SK-N-SH (cell line): ENCODE measurements at regions of chr9 and their contacts with region 1.

Region 1: DNA sequence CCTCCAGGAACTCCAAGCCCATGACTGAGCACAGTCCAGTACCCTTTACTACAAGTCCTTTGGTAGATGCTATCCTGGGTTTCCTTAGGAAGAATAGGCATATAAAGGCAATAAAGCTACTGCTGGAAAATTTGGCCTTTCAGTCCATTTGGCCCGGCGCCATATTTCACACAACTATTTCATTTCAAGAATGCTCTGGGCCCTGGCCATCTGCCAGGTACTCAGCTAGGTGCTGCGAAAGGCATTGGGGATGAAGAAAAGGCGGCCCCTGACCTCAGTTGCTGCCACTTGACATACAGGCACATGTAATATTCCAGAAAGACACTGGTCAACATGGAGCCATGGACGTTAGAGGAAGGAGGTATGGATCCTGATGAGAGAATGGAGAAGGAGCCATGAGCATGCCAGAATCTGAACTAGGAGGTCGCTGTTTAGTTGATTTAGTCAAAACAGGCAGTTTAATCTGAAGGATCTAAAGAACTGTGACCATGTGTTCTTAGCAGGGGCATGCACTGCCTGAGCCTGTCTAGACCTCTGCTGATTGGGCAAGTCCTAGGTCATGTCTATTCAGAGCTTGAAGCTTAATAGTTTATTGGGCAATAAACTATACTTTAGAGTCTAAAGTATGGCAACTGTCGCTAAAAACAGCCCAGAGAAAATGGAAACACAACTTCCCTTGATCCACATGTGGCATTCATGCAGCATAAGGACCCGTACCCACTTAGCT is 149.3 kb downstream of the MELK start:
- DNase-seq: no peak
- H3K4me3 ChIP-seq: no peak overlapping the region
- H3K27ac ChIP-seq: no peak overlapping the region
- H3K4me1 ChIP-seq: no peaks in the 10 kb centered on the region
- H3K27me3 ChIP-seq: no peaks in the 10 kb centered on the region; the same call in 1 of the 2 replicates
- CTCF ChIP-seq: no peak
- EP300 ChIP-seq: no peak
- RAD21 ChIP-seq: no peak

Region 2: GRCh38 chr9:36632892-36633291 is 89.1 kb before region 1 on chr9:
- CTCF ChIA-PET with region 1: interaction called, 20 read pairs
- POLR2A ChIA-PET with region 1: no interaction called
- DNase-seq: peak; percentile 47
- H3K4me3 ChIP-seq: no peak overlapping the region
- H3K27ac ChIP-seq: no peak overlapping the region
- H3K4me1 ChIP-seq: no peaks in the 10 kb centered on the region
- H3K27me3 ChIP-seq: no peaks in the 10 kb centered on the region
- CTCF ChIP-seq: peak; percentile 77
- EP300 ChIP-seq: no peak
- RAD21 ChIP-seq: peak; percentile 67

Region 3: GRCh38 chr9:36946653-36947052 is 224.6 kb after region 1 on chr9:
- CTCF ChIA-PET with region 1: no interaction called
- POLR2A ChIA-PET with region 1: no interaction called
- DNase-seq: peak; percentile 45
- H3K4me3 ChIP-seq: no peak overlapping the region
- H3K27ac ChIP-seq: no peak overlapping the region
- H3K4me1 ChIP-seq: peaks cover 0 to 2% of the 10 kb centered on the region in 2 experiments; a peak in 2 of 4 replicates
- H3K27me3 ChIP-seq: no peaks in the 10 kb centered on the region; the same call in 1 of the 2 replicates
- CTCF ChIP-seq: no peak
- EP300 ChIP-seq: no peak
- RAD21 ChIP-seq: no peak